ENCODE measurements at regions of chr9 and their contacts with region 1.

Region 1: GRCh38 chr9:83444110-83444509 is 94.1 kb downstream of the FRMD3 start:
- DNase-seq: peak; percentile 77 to 86
- ATAC-seq: peak; percentile 79
- H3K4me3 ChIP-seq: no peak overlapping the region
- H3K27ac ChIP-seq: peak overlapping the region in 1 of 2 donors; percentile 58
- H3K4me1 ChIP-seq: peaks cover 6 to 14% of the 10 kb centered on the region in 2 donors
- H3K27me3 ChIP-seq: no peaks in the 10 kb centered on the region

Region 2: DNA sequence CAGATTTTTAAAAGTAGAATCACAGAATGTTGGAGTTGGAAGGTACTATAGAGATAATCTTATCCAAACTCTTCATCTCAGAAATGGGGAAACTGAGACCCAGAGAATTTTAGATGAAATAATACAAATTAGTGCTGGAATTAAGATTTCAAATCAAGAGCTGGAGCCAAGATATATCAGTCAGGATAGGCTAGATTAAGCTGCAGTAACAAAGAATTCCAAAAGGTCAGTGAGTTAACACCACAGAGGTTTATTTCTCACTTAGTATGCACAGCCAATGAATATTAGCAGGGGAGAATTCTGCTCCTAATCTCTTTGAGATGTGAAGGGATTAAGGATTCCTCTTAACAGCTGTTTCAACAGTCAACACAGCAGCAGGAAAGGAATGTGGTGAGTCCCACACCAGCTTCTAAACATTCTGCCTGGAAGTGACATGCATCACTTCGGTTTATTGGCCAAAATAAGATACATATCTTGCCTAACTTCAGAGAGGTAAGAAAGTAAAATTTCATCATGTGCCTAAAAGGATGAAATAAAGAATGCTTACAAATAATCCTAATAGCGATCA is 42.7 kb before region 1 on chr9:
- intact Hi-C with region 1: no loop called
- DNase-seq: no peak
- ATAC-seq: no peak
- H3K4me3 ChIP-seq: no peak overlapping the region
- H3K27ac ChIP-seq: no peak overlapping the region
- H3K4me1 ChIP-seq: peaks cover 0 to 3% of the 10 kb centered on the region in 2 donors
- H3K27me3 ChIP-seq: no peaks in the 10 kb centered on the region

Region 3: GRCh38 chr9:83491995-83492394 is 47.9 kb after region 1 on chr9:
- intact Hi-C with region 1: loop called in 1 of 2 experiments (anchors 10 kb)
- DNase-seq: no peak
- ATAC-seq: no peak
- H3K4me3 ChIP-seq: no peak overlapping the region
- H3K27ac ChIP-seq: no peak overlapping the region
- H3K4me1 ChIP-seq: no peaks in the 10 kb centered on the region
- H3K27me3 ChIP-seq: no peaks in the 10 kb centered on the region

Region 4: GRCh38 chr9:84677092-84677491 is 1233.0 kb after region 1 on chr9:
- intact Hi-C with region 1: no loop called
- DNase-seq: no peak
- ATAC-seq: no peak
- H3K4me3 ChIP-seq: no peak overlapping the region
- H3K27ac ChIP-seq: no peak overlapping the region
- H3K4me1 ChIP-seq: no peaks in the 10 kb centered on the region
- H3K27me3 ChIP-seq: no peaks in the 10 kb centered on the region